GM12878 (cell line): ENCODE measurements at regions of chr10 and their contacts with region 1.

Region 1: GRCh38 chr10:75540357-75540966 is 109.0 kb downstream of the LRMDA start:
- DNase-seq: no peak
- ATAC-seq: peak; percentile 86
- H3K4me3 ChIP-seq: no peak overlapping the region
- H3K27ac ChIP-seq: no peak overlapping the region
- H3K4me1 ChIP-seq: no peaks in the 10 kb centered on the region; the same call in 1 of the 2 replicates
- H3K27me3 ChIP-seq: no peaks in the 10 kb centered on the region; a peak in 1 of 4 replicates
- CTCF ChIP-seq: peak; percentile 1 to 17 (median 5); a peak in 1 of 6 replicates
- EP300 ChIP-seq: no peak
- POLR2A ChIP-seq: no peak
- RAD21 ChIP-seq: no peak

Region 2: GRCh38 chr10:75508239-75508813 is 32.1 kb before region 1 on chr10:
- CTCF ChIA-PET with region 1: no interaction called
- POLR2A ChIA-PET with region 1: interaction called, 6 read pairs
- RAD21 ChIA-PET with region 1: interaction called, 18 read pairs
- SMC1A ChIA-PET with region 1: interaction called, 11 read pairs
- in situ Hi-C with region 1: no loop called
- intact Hi-C with region 1: no loop called
- DNase-seq: no peak
- ATAC-seq: no peak
- H3K4me3 ChIP-seq: no peak overlapping the region
- H3K27ac ChIP-seq: no peak overlapping the region
- H3K4me1 ChIP-seq: peaks cover 12% of the 10 kb centered on the region
- H3K27me3 ChIP-seq: peaks cover 0 to 2% of the 10 kb centered on the region in 2 experiments; a peak in 1 of 4 replicates
- CTCF ChIP-seq: no peak
- EP300 ChIP-seq: no peak
- POLR2A ChIP-seq: no peak
- RAD21 ChIP-seq: no peak

Region 3: GRCh38 chr10:75530337-75530736 is 10.1 kb before region 1 on chr10:
- CTCF ChIA-PET with region 1: interaction called, 13 read pairs
- POLR2A ChIA-PET with region 1: interaction called, 5 read pairs
- RAD21 ChIA-PET with region 1: no interaction called
- SMC1A ChIA-PET with region 1: interaction called, 10 read pairs
- in situ Hi-C with region 1: no loop called
- intact Hi-C with region 1: no loop called
- DNase-seq: no peak
- ATAC-seq: no peak
- H3K4me3 ChIP-seq: no peak overlapping the region
- H3K27ac ChIP-seq: no peak overlapping the region
- H3K4me1 ChIP-seq: no peaks in the 10 kb centered on the region
- H3K27me3 ChIP-seq: no peaks in the 10 kb centered on the region
- CTCF ChIP-seq: no peak
- EP300 ChIP-seq: no peak
- POLR2A ChIP-seq: no peak
- RAD21 ChIP-seq: no peak

Region 4: DNA sequence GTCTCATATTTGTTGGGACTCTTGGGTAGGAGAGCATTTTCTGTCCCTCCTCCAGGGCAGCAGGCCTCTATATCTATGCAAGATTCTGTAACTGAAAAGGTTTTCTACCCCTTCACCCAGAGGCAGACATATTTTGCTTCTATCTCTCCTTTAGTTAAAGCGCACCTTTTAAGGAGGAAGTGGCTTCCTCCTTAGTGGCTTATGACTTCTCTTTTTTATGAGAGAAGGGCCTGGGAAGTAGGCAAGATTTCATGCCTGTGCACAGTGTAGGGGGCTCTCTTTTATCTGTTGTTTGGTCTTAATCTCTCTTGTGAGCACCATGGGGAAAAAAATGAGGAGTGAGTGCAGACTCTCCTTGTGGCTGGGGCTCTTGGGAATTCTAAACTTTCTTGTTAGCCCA is 13.1 kb after region 1 on chr10:
- CTCF ChIA-PET with region 1: no interaction called
- POLR2A ChIA-PET with region 1: interaction called, 3 read pairs
- RAD21 ChIA-PET with region 1: no interaction called
- SMC1A ChIA-PET with region 1: interaction called, 19 read pairs
- in situ Hi-C with region 1: no loop called
- intact Hi-C with region 1: no loop called
- DNase-seq: no peak
- ATAC-seq: peak; percentile 28; the same call in 2 of the 3 replicates
- H3K4me3 ChIP-seq: no peak overlapping the region
- H3K27ac ChIP-seq: no peak overlapping the region
- H3K4me1 ChIP-seq: no peaks in the 10 kb centered on the region
- H3K27me3 ChIP-seq: no peaks in the 10 kb centered on the region
- CTCF ChIP-seq: no peak
- EP300 ChIP-seq: no peak
- POLR2A ChIP-seq: no peak
- RAD21 ChIP-seq: no peak

Region 5: GRCh38 chr10:75672841-75673240 is 132.4 kb after region 1 on chr10:
- CTCF ChIA-PET with region 1: no interaction called
- POLR2A ChIA-PET with region 1: no interaction called
- RAD21 ChIA-PET with region 1: no interaction called
- SMC1A ChIA-PET with region 1: no interaction called
- in situ Hi-C with region 1: no loop called
- intact Hi-C with region 1: no loop called
- DNase-seq: no peak
- ATAC-seq: no peak
- H3K4me3 ChIP-seq: no peak overlapping the region
- H3K27ac ChIP-seq: no peak overlapping the region
- H3K4me1 ChIP-seq: no peaks in the 10 kb centered on the region
- H3K27me3 ChIP-seq: no peaks in the 10 kb centered on the region
- CTCF ChIP-seq: no peak
- EP300 ChIP-seq: no peak
- POLR2A ChIP-seq: no peak
- RAD21 ChIP-seq: no peak

Region 6: GRCh38 chr10:75922435-75922834 is 382.0 kb after region 1 on chr10:
- CTCF ChIA-PET with region 1: no interaction called
- POLR2A ChIA-PET with region 1: no interaction called
- RAD21 ChIA-PET with region 1: no interaction called
- SMC1A ChIA-PET with region 1: no interaction called
- in situ Hi-C with region 1: no loop called
- intact Hi-C with region 1: no loop called
- DNase-seq: no peak
- ATAC-seq: no peak
- H3K4me3 ChIP-seq: no peak overlapping the region
- H3K27ac ChIP-seq: no peak overlapping the region
- H3K4me1 ChIP-seq: no peaks in the 10 kb centered on the region
- H3K27me3 ChIP-seq: no peaks in the 10 kb centered on the region
- CTCF ChIP-seq: no peak; a peak in 1 of 6 replicates
- EP300 ChIP-seq: no peak
- POLR2A ChIP-seq: no peak
- RAD21 ChIP-seq: no peak